ENCODE measurements at regions of chr2 and their contacts with region 1.

Region 1: GRCh38 chr2:162581959-162582798 is 238.2 kb downstream of the GCA start:
- DNase-seq: peak; percentile 99
- ATAC-seq: peak; percentile 94
- H3K4me3 ChIP-seq: peak overlapping the region in 2 of 3 experiments; percentile 5 to 12; a peak in 3 of 6 replicates
- H3K27ac ChIP-seq: peak overlapping the region; percentile 52
- H3K4me1 ChIP-seq: peaks cover 76% of the 10 kb centered on the region
- H3K27me3 ChIP-seq: no peaks in the 10 kb centered on the region; a peak in 1 of 5 replicates
- CTCF ChIP-seq: 0 out of 2 replicates have a peak, but pooled peaks have one; percentile 32
- EP300 ChIP-seq: peak; percentile 97 to 100
- POLR2A ChIP-seq: no peak
- RAD21 ChIP-seq: peak; percentile 66

Region 2: GRCh38 chr2:162343824-162344616 is 238.2 kb before region 1 on chr2 and contains the start of gene GCA:
- CTCF ChIA-PET with region 1: no interaction called
- POLR2A ChIA-PET with region 1: no interaction called
- in situ Hi-C with region 1: no loop called
- intact Hi-C with region 1: loop called (anchors 5 kb)
- DNase-seq: peak; percentile 97
- ATAC-seq: peak; percentile 99
- H3K4me3 ChIP-seq: peak within 1 kb of the TSS; percentile 77 to 97 (median 90)
- H3K27ac ChIP-seq: peak within 1 kb of the TSS; percentile 61
- H3K4me1 ChIP-seq: peaks cover 22% of the 10 kb centered on the region
- H3K27me3 ChIP-seq: no peaks in the 10 kb centered on the region; a peak in 1 of 5 replicates
- CTCF ChIP-seq: peak; percentile 53
- EP300 ChIP-seq: no peak
- POLR2A ChIP-seq: peak; percentile 63 to 96; a peak in 3 of 4 replicates
- RAD21 ChIP-seq: peak; percentile 28; the same call in 1 of the 2 replicates
- total RNA-seq, gene GCA: 48.3 and 69.6 TPM in 2 replicates

Region 3: DNA sequence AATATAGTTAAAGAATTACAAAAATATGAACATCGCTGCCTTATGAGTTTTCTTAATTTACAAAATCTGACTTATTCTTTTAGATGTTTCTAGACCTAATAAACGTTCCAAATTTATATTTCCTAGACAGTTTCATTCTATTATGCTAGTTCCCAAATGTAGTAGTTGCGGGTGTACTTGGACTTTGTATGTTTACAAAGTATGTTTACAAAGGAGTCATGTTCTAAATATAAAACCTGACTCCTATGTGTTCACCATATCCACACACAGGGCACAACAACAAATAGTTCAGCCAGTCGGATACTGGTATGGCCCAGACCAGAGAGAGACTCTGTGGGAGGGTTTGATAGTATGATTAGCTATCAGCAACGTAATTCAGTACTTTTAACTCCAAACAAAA is 25.7 kb after region 1 on chr2:
- CTCF ChIA-PET with region 1: no interaction called
- POLR2A ChIA-PET with region 1: interaction called, 4 read pairs
- in situ Hi-C with region 1: no loop called
- intact Hi-C with region 1: loop called (anchors 1 kb)
- DNase-seq: peak; percentile 65
- ATAC-seq: peak; percentile 100
- H3K4me3 ChIP-seq: no peak overlapping the region
- H3K27ac ChIP-seq: no peak overlapping the region
- H3K4me1 ChIP-seq: peaks cover 19% of the 10 kb centered on the region
- H3K27me3 ChIP-seq: no peaks in the 10 kb centered on the region
- CTCF ChIP-seq: no peak
- EP300 ChIP-seq: peak in 1 of 2 experiments; percentile 91; a peak in 1 of 4 replicates
- POLR2A ChIP-seq: no peak
- RAD21 ChIP-seq: no peak

Region 4: DNA sequence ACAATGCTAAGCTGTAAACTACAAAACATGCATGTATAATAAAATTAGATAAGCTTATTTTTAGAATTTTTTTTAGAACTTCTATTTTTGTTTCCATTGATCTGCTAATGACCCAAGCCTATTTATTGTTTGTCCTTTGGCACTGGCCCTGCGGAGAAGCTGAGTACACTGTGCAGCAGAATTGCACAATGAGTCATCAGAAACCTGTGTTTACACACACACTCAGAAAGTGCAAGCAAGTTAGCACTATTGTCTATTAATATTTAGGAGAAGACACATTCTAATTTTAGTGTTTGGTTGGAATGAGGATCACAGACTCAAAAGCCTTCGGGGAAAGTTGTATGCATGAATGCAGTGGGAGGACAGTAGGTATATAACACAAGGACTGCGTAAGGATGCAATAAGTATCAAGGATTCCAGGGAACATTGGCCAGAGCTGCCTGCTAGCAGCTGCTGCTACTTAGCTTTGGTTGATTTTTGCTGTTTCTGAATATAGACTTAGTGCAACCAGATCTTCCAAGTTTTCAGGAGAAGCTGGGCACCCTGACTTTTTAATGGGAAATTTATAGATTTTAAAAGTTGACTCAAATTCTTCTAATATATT is 128.2 kb after region 1 on chr2:
- CTCF ChIA-PET with region 1: no interaction called
- POLR2A ChIA-PET with region 1: no interaction called
- in situ Hi-C with region 1: no loop called
- intact Hi-C with region 1: loop called (anchors 5 kb)
- DNase-seq: peak; percentile 61
- ATAC-seq: peak; percentile 96
- H3K4me3 ChIP-seq: peak overlapping the region in 1 of 3 experiments; percentile 5; a peak in 1 of 6 replicates
- H3K27ac ChIP-seq: no peak overlapping the region
- H3K4me1 ChIP-seq: peaks cover 42% of the 10 kb centered on the region
- H3K27me3 ChIP-seq: no peaks in the 10 kb centered on the region
- CTCF ChIP-seq: no peak
- EP300 ChIP-seq: peak in 1 of 2 experiments; percentile 74; a peak in 2 of 4 replicates
- POLR2A ChIP-seq: no peak
- RAD21 ChIP-seq: no peak